ENCODE measurements at regions of chr6 and their contacts with region 1.

Region 1: DNA sequence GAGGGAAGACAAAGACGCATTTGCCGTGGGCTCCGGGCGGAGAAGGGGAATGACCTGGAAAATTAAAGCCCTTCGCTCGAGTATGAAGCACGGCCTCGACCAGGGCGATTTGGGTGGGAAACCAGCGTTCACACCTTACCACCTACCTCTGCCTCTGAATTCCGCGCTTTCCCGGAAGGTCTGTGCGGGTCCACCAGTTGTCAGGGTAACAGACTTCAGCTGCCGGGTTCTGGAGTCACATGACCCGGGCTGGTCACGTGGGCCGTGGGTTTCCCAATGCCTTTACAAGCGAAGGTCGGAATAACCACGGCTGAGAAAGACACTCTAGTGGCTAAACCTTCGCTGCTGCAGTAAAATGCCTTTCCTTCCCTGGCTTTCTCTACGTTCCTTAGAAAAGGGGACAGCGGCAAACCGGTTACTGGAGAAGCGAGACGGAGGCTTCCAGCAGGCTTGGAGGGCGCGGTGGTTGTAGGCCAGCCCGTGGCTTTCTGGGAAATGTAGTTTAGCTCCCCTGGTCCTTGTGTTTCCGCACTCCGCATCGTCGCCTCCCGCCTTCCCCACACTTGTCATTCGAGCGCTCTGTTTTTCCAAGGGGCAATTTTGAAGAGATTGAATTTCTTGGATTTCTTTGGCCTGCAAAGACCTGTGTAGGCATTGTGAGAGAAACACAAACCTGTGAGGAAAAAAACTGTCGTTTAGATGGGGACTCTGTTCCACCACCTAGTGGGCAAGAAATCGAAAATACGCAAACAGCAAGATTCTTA is at the start of gene CEP162:
- DNase-seq: peak; percentile 95
- H3K4me3 ChIP-seq: peak within 1 kb of the TSS; percentile 57 to 74 (median 67)
- H3K27ac ChIP-seq: peak within 1 kb of the TSS; percentile 14
- H3K4me1 ChIP-seq: peaks cover 7% of the 10 kb centered on the region
- H3K27me3 ChIP-seq: peaks cover 11 to 24% of the 10 kb centered on the region in 2 experiments
- CTCF ChIP-seq: peak; percentile 55 to 62
- POLR2A ChIP-seq: peak; percentile 20
- total RNA-seq, gene CEP162: 8.8 and 10.8 TPM in 2 replicates

Region 2: GRCh38 chr6:83859410-83860358 is 367.9 kb before region 1 on chr6 and contains the start of gene CYB5R4:
- CTCF ChIA-PET with region 1: interaction called, 7 read pairs
- POLR2A ChIA-PET with region 1: no interaction called
- dilution Hi-C with region 1: no loop called
- intact Hi-C with region 1: loop called (anchors 1 kb)
- DNase-seq: peak; percentile 94
- H3K4me3 ChIP-seq: peak within 1 kb of the TSS; percentile 29 to 85 (median 79)
- H3K27ac ChIP-seq: peak within 1 kb of the TSS; percentile 36
- H3K4me1 ChIP-seq: peaks cover 8% of the 10 kb centered on the region
- H3K27me3 ChIP-seq: peaks cover 3 to 13% of the 10 kb centered on the region in 2 experiments
- CTCF ChIP-seq: peak; percentile 46 to 76
- POLR2A ChIP-seq: peak; percentile 75
- total RNA-seq, gene CYB5R4: 13.4 TPM in 2 replicates

Region 3: DNA sequence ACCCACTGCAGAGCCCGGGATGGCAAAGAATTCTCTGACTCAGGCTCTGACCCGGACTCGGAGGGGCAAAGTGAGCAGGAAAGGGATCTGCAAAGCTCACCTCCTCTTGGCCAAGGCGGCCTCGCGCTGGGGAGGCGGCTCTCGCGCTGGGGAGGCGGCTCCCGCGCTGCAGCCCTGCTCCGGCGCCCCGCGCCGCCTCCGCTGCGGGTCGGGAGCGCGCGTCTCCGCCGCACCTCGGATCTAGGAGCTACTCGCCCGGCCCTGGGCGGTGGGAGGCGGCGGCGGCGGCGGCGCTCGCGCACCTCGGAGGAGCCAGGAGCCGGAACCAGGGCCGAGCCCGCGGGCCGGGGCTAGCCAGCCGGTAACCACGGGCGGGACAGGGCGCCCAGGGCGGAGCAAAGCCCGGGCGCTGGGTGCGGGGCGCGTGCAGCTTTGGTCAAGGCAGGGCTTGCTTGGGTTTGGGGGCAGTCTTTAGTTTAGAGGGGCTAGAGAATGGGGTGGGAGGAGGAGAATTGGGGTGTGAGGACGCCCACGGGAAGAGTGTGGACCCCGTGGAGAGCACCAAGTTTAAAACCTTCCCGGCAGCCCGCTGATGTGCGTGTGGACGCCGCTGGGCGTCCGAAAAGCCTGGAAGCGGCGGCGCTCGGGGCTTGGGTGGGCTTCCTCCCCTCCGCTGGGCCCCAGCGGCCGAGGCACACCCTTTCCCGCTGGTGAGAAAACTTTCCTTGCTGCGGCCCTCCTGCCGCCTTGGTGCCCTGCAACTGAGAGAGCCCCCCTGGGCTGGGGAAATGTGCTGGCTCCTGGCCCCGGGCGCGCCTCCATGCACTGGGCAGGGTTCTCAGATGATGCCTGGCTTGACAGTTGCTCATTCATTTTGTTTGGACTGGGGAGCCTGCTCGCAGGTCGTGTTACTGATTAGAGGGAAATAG is 193.8 kb before region 1 on chr6 and contains the start of gene MRAP2:
- CTCF ChIA-PET with region 1: no interaction called
- POLR2A ChIA-PET with region 1: no interaction called
- dilution Hi-C with region 1: no loop called
- intact Hi-C with region 1: loop called (anchors 5 kb)
- DNase-seq: peak; percentile 32
- H3K4me3 ChIP-seq: peak within 1 kb of the TSS; percentile 41 to 67 (median 52)
- H3K27ac ChIP-seq: no peak within 1 kb of the TSS
- H3K4me1 ChIP-seq: peaks cover 6% of the 10 kb centered on the region
- H3K27me3 ChIP-seq: peaks cover 3 to 5% of the 10 kb centered on the region in 2 experiments
- CTCF ChIP-seq: no peak
- POLR2A ChIP-seq: no peak
- total RNA-seq, gene MRAP2: 3.5 and 5.8 TPM in 2 replicates

Region 4: DNA sequence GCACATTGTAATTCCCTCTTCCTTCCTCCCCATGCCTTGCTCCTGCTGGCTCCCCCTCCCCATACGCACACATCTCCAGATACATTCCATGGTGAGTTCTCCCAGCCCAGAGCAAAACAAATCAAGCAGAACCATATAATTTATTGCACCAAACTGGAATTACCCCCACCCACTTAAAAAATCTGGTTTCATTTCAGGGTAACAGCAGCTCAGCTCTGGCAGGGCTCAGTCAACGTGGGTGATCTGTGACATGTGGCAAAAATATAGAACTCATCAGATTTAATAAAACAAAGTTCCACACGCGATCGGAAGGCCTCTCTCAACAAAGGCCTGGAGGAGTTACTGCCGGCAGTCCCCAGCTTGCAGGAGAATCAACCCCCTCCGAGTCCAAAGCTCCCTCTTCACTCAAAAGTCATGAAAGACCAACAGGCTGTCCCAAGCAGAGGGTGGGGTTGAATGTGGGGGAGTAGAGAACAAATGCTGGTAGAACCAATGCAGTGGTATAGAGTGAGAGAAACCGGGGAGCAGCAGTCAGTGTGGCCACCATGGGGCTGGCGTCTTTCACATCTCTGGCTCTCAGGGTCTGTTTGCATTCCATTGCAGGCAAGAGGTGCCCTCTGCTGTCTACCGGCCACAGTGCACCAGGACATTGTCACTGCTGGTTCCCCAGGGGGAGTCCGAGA is 899.0 kb after region 1 on chr6:
- CTCF ChIA-PET with region 1: interaction called, 14 read pairs
- POLR2A ChIA-PET with region 1: no interaction called
- dilution Hi-C with region 1: no loop called
- intact Hi-C with region 1: no loop called
- DNase-seq: peak; percentile 75
- H3K4me3 ChIP-seq: no peak overlapping the region
- H3K27ac ChIP-seq: no peak overlapping the region
- H3K4me1 ChIP-seq: no peaks in the 10 kb centered on the region
- H3K27me3 ChIP-seq: peaks cover 14 to 17% of the 10 kb centered on the region in 2 experiments
- CTCF ChIP-seq: peak; percentile 72 to 89
- POLR2A ChIP-seq: no peak

Measured in endothelial cell of umbilical vein (primary cell).